GM12878 (cell line): ENCODE measurements at regions of chr6 and their contacts with region 1.

Region 1: GRCh38 chr6:9842004-9842725 is 572.7 kb downstream of the TFAP2A start:
- DNase-seq: no peak
- ATAC-seq: no peak
- H3K4me3 ChIP-seq: no peak overlapping the region
- H3K27ac ChIP-seq: no peak overlapping the region
- H3K4me1 ChIP-seq: no peaks in the 10 kb centered on the region
- H3K27me3 ChIP-seq: no peaks in the 10 kb centered on the region
- CTCF ChIP-seq: no peak
- EP300 ChIP-seq: no peak
- POLR2A ChIP-seq: no peak
- RAD21 ChIP-seq: no peak

Region 2: DNA sequence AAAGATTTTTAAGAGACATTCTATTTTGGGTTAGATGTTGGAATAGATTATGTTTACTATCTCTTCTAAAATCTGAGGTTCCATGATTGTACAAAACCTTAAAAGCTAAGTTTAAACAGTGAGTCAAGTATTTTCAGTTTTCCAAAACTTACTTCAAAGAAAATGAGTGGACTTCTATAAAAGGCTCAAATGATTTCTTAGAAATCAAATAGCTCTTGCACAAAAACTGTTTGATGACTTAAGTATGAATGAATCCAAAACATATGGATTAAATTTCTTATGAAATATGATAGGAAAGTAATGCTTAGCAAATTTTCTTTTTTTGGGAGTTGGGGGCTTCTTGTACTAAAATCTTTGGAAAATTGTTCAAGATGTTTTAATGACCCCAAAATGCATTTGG is 569.5 kb before region 1 on chr6:
- CTCF ChIA-PET with region 1: no interaction called
- POLR2A ChIA-PET with region 1: no interaction called
- RAD21 ChIA-PET with region 1: no interaction called
- SMC1A ChIA-PET with region 1: no interaction called
- in situ Hi-C with region 1: no loop called
- intact Hi-C with region 1: no loop called
- DNase-seq: no peak
- ATAC-seq: no peak
- H3K4me3 ChIP-seq: no peak overlapping the region
- H3K27ac ChIP-seq: no peak overlapping the region
- H3K4me1 ChIP-seq: no peaks in the 10 kb centered on the region
- H3K27me3 ChIP-seq: no peaks in the 10 kb centered on the region
- CTCF ChIP-seq: no peak
- EP300 ChIP-seq: no peak
- POLR2A ChIP-seq: no peak
- RAD21 ChIP-seq: no peak

Region 3: GRCh38 chr6:9795880-9796279 is 46.3 kb before region 1 on chr6:
- CTCF ChIA-PET with region 1: no interaction called
- POLR2A ChIA-PET with region 1: no interaction called
- RAD21 ChIA-PET with region 1: no interaction called
- SMC1A ChIA-PET with region 1: no interaction called
- in situ Hi-C with region 1: no loop called
- intact Hi-C with region 1: loop called (anchors 2 kb)
- DNase-seq: no peak
- ATAC-seq: no peak
- H3K4me3 ChIP-seq: no peak overlapping the region
- H3K27ac ChIP-seq: no peak overlapping the region
- H3K4me1 ChIP-seq: no peaks in the 10 kb centered on the region
- H3K27me3 ChIP-seq: no peaks in the 10 kb centered on the region
- CTCF ChIP-seq: no peak
- EP300 ChIP-seq: no peak
- POLR2A ChIP-seq: no peak
- RAD21 ChIP-seq: no peak